Dendritic cell treated with granulocyte-macrophage colony-stimulating factor and Interleukin-4, amounts not matched to agents 40 ng/mL and 50 ng/mL, for 4 days (primary cell): ENCODE measurements at regions of chr1 and their contacts with region 1.

Region 1: GRCh38 chr1:44819608-44820327 is 11.4 kb downstream of the BTBD19 start:
- H3K4me3 Mint-ChIP-seq: peak overlapping the region; percentile 93
- H3K27ac Mint-ChIP-seq: peak overlapping the region; percentile 98
- H3K4me1 Mint-ChIP-seq: peaks cover 48% of the 10 kb centered on the region
- H3K27me3 Mint-ChIP-seq: no peaks in the 10 kb centered on the region

Region 2: GRCh38 chr1:44294588-44295007 is 525.2 kb before region 1 on chr1:
- intact Hi-C with region 1: no loop called
- H3K4me3 Mint-ChIP-seq: no peak overlapping the region
- H3K27ac Mint-ChIP-seq: no peak overlapping the region
- H3K4me1 Mint-ChIP-seq: peaks cover 5% of the 10 kb centered on the region
- H3K27me3 Mint-ChIP-seq: no peaks in the 10 kb centered on the region

Region 3: DNA sequence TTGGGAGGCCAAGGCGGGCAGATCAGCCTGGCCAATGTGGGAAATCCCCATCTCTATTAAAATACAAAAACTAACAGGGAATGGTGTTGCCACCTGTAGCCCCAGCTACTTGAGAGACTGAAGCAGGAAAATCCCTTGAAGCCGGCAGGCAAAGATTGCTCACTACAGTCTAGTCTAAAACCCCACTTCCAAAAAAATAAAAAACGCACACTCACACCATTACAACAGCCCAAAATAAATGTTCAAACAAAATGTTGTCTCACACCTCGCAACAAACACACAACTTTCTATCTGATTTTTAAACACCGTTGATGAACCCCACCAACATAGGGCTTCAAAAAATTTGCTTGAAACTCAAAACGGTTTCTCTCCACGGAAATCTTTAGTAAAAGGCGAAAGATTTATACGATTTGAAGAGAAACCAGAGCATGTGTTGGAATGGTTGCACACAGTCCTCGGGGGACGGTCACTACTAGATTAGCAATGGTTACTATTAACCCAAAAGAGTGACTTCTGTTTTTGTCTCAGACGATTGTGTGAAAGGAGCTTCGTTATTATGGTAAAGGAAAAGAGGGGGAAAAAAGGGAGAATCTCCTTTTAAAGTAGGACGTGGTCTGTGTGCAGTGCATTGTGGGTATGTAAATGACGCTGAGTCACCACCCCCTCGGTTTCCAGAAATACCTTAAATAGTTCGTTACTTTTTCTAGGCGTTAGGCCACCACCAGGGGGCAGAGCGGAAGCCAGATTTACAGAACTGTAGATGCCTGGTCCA is 88.8 kb before region 1 on chr1 and contains the start of gene RNU5D-1:
- intact Hi-C with region 1: loop called (anchors 1 kb)
- H3K4me3 Mint-ChIP-seq: peak within 1 kb of the TSS; percentile 65
- H3K27ac Mint-ChIP-seq: peak within 1 kb of the TSS; percentile 96
- H3K4me1 Mint-ChIP-seq: peaks cover 40% of the 10 kb centered on the region
- H3K27me3 Mint-ChIP-seq: no peaks in the 10 kb centered on the region